AG04449 (cell line): ENCODE measurements at regions of chr1 and their contacts with region 1.

Region 1: GRCh38 chr1:23403735-23404486 is 20.6 kb downstream of the TCEA3 start:
- DNase-seq: peak; percentile 76
- H3K4me3 ChIP-seq: no peak overlapping the region; the same call in 1 of the 2 replicates
- CTCF ChIP-seq: peak; percentile 92

Region 2: GRCh38 chr1:22739648-22740385 is 664.1 kb before region 1 on chr1:
- CTCF ChIA-PET with region 1: no interaction called
- POLR2A ChIA-PET with region 1: no interaction called
- DNase-seq: peak; percentile 67
- H3K4me3 ChIP-seq: no peak overlapping the region
- CTCF ChIP-seq: no peak

Region 3: GRCh38 chr1:23322770-23323169 is 81.1 kb before region 1 on chr1:
- CTCF ChIA-PET with region 1: interaction called, 11 read pairs
- POLR2A ChIA-PET with region 1: no interaction called
- DNase-seq: no peak
- H3K4me3 ChIP-seq: no peak overlapping the region
- CTCF ChIP-seq: no peak

Region 4: GRCh38 chr1:23344111-23344986 is 59.6 kb before region 1 on chr1 and contains the start of gene HNRNPR:
- CTCF ChIA-PET with region 1: interaction called, 7 read pairs
- POLR2A ChIA-PET with region 1: interaction called, 12 read pairs
- DNase-seq: peak; percentile 100
- H3K4me3 ChIP-seq: peak within 1 kb of the TSS; percentile 63
- CTCF ChIP-seq: no peak

Region 5: DNA sequence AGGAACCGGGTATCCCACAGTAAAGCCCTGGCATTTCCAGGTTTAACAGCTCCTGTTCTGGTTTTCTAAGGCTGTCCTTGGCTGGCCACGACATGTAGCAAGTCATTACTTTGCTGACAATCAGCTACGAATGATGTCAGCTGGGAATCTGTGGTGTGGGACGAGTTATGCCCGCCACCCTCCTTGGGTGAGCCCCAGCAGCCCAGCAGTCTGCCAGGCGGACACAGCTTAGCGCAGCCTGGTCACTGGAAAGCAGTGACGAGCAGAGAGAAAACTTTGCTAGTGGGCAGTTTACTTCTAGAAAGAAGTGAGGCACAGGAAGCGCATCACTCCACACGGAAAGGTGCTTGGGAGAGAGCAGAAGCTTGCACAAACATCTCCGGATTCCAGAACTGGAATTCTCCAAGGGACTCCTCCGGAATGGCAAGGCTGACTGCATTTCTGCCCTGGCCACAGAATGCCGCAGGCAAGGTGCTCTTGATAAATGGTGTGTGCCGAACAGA is 18.7 kb before region 1 on chr1:
- CTCF ChIA-PET with region 1: interaction called, 25 read pairs
- POLR2A ChIA-PET with region 1: no interaction called
- DNase-seq: no peak
- H3K4me3 ChIP-seq: no peak overlapping the region
- CTCF ChIP-seq: no peak